ENCODE measurements at regions of chr1 and their contacts with region 1.

Region 1: DNA sequence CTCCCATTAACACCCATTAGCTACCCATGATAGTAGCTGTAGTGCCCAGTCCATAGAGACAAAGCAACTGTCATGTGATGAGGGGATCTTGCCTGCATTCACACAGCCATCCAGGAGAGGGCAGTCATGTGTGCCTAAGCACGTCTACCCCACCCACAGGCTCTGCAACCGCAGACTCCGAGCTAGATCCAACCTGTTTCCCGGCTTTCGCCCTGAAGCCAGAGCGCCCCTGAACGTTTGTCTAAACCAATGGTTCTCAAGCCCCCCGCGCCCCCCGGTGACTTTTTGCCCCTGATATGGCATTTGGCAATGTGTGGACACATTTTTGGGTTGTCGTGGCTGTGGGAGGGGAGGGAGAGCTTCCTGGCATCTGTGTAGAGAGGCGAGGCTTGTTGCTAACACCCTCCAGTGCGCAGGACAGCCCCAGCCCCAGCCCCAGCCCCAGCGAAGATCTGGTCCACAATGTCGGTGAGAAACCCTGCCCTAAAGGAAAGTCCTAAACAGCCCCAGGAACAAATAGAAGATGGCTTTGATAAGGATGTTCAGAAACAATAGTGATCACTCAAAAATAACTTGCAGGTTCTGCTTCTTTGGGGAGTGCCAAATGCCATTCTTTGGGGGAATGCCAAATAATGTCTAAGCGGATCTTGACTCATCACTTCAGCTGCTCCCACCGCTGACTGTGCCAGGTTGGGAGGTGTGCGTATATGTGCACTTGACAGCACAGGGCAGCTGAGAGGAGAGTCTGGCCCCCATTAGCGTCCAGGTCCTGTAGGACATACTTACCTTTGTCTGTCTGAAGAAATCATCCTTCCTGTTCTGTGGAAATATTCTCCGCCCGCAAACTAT is 34.5 kb downstream of the SLC44A3 start:
- DNase-seq: peak; percentile 72 to 78
- H3K4me3 ChIP-seq: no peak overlapping the region
- H3K4me3 Mint-ChIP-seq: no peak overlapping the region
- H3K27ac Mint-ChIP-seq: no peak overlapping the region
- H3K4me1 ChIP-seq: peaks cover 9% of the 10 kb centered on the region
- H3K4me1 Mint-ChIP-seq: no peaks in the 10 kb centered on the region
- H3K27me3 ChIP-seq: no peaks in the 10 kb centered on the region
- H3K27me3 Mint-ChIP-seq: no peaks in the 10 kb centered on the region
- CTCF ChIP-seq: peak; percentile 55 to 71

Region 2: GRCh38 chr1:94892604-94893254 is 38.0 kb after region 1 on chr1:
- CTCF ChIA-PET with region 1: interaction called, 4 read pairs
- POLR2A ChIA-PET with region 1: no interaction called
- intact Hi-C with region 1: loop called (anchors 5 kb)
- DNase-seq: no peak
- H3K4me3 ChIP-seq: no peak overlapping the region
- H3K4me3 Mint-ChIP-seq: no peak overlapping the region
- H3K27ac Mint-ChIP-seq: no peak overlapping the region
- H3K4me1 ChIP-seq: peaks cover 6% of the 10 kb centered on the region; the same call in 1 of the 2 replicates
- H3K4me1 Mint-ChIP-seq: peaks cover 14% of the 10 kb centered on the region
- H3K27me3 ChIP-seq: no peaks in the 10 kb centered on the region
- H3K27me3 Mint-ChIP-seq: no peaks in the 10 kb centered on the region
- CTCF ChIP-seq: no peak

Region 3: DNA sequence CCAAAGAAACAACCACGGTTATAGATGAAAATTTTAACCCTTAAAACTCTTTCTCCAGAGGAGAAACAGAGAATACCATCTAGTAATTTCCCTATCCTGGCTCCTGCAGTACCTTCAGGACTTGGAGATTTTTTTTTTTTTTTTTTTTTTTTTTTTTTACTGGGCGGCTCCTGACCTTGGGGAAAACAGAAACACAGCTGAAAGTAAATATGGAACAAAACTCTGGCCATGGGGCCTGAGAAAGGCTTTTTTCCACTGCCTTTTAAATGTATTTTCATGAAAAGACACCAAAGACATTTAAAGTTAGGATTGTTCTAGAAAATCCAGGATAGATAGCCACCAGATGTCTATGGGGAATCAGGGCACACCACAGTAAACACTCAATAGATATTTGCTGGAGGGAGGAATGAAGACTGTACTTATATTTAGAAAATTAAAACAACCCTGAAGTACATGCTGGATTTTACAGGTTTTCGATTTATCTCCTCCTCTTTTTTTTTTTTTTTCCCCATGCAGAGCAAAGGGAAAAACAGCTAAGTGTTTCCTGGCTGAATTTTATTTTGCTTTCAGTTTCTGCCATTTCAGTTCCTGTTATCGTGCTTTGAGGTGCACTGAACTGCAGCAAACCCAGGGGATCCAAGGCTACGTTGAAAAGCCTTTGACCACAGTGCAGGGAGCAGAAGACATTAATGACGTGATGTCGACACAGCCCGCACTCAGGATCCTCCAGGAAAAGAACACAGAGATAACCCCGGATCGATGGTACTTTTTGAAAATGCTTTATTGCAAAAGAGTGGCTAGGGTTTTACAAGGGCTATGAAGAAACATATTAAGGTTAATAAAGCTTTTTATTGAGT is 108.0 kb after region 1 on chr1:
- CTCF ChIA-PET with region 1: no interaction called
- POLR2A ChIA-PET with region 1: no interaction called
- intact Hi-C with region 1: no loop called
- DNase-seq: peak in 1 of 2 experiments; percentile 45
- H3K4me3 ChIP-seq: no peak overlapping the region
- H3K4me3 Mint-ChIP-seq: peak overlapping the region; percentile 22
- H3K27ac Mint-ChIP-seq: no peak overlapping the region
- H3K4me1 ChIP-seq: peaks cover 4% of the 10 kb centered on the region; the same call in 1 of the 2 replicates
- H3K4me1 Mint-ChIP-seq: no peaks in the 10 kb centered on the region
- H3K27me3 ChIP-seq: no peaks in the 10 kb centered on the region
- H3K27me3 Mint-ChIP-seq: no peaks in the 10 kb centered on the region
- CTCF ChIP-seq: no peak

Region 4: GRCh38 chr1:95369985-95370690 is 515.5 kb after region 1 on chr1:
- CTCF ChIA-PET with region 1: no interaction called
- POLR2A ChIA-PET with region 1: no interaction called
- intact Hi-C with region 1: no loop called
- DNase-seq: peak in 1 of 2 experiments; percentile 5
- H3K4me3 ChIP-seq: no peak overlapping the region
- H3K4me3 Mint-ChIP-seq: peak overlapping the region; percentile 32
- H3K27ac Mint-ChIP-seq: no peak overlapping the region
- H3K4me1 ChIP-seq: no peaks in the 10 kb centered on the region
- H3K4me1 Mint-ChIP-seq: peaks cover 15% of the 10 kb centered on the region
- H3K27me3 ChIP-seq: no peaks in the 10 kb centered on the region
- H3K27me3 Mint-ChIP-seq: no peaks in the 10 kb centered on the region
- CTCF ChIP-seq: no peak

Measured in Caco-2 (cell line).